Activated CD4-positive, alpha-beta memory T cell treated with anti-CD3 and anti-CD28 coated beads for 36 hours (primary cell): ENCODE measurements at regions of chr10 and their contacts with region 1.

Region 1: GRCh38 chr10:117216611-117217195 is 19.4 kb downstream of the KCNK18 start:
- DNase-seq: peak; percentile 72
- H3K4me3 Mint-ChIP-seq: peak overlapping the region; percentile 63
- H3K27ac Mint-ChIP-seq: no peak overlapping the region
- H3K4me1 Mint-ChIP-seq: peaks cover 9% of the 10 kb centered on the region
- H3K27me3 Mint-ChIP-seq: peaks cover 27% of the 10 kb centered on the region

Region 2: DNA sequence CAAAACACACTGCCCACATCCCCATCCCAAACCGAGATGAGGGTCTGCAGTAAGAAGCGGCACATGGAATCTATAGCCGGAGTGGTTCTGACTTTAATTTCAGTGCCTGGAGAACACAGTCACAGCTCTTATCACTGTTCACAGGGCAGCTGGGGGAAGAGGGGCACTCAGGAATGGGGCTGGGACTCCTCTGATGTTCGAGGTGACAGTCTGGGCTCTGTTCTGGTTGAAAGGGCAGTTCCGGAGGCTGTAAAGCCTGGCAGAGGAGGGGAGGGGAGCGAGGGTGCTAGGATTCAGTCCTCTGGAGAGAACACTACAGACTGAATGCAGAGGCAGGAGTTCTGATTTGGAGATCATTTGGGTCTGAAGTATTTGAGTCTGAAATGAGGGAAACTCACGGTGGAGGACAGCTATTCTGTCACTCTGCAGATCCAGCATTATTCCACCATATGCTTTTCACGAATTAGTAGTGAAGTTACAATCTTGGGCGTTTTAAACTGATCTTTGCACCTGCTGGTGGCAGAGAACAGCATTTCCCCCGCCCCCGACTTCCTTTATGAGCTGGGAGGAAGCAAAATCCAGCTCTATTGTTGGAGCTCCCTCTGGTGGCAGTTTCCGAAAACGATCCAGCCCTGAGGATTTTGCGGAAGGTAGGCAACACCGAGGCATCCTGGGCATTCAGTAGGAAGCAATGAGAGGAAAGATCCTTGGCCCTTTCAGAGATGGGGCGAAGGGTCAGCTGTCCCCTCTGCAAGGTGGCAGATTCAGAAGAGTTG is 42.1 kb before region 1 on chr10:
- CTCF ChIA-PET with region 1: interaction called, 18 read pairs
- POLR2A ChIA-PET with region 1: no interaction called
- intact Hi-C with region 1: no loop called
- DNase-seq: peak; percentile 91
- H3K4me3 Mint-ChIP-seq: peak overlapping the region; percentile 65
- H3K27ac Mint-ChIP-seq: no peak overlapping the region
- H3K4me1 Mint-ChIP-seq: peaks cover 14% of the 10 kb centered on the region
- H3K27me3 Mint-ChIP-seq: peaks cover 34% of the 10 kb centered on the region

Region 3: GRCh38 chr10:117226824-117227451 is 10.2 kb after region 1 on chr10:
- CTCF ChIA-PET with region 1: interaction called, 19 read pairs
- POLR2A ChIA-PET with region 1: no interaction called
- intact Hi-C with region 1: no loop called
- DNase-seq: no peak
- H3K4me3 Mint-ChIP-seq: no peak overlapping the region
- H3K27ac Mint-ChIP-seq: no peak overlapping the region
- H3K4me1 Mint-ChIP-seq: no peaks in the 10 kb centered on the region
- H3K27me3 Mint-ChIP-seq: peaks cover 31% of the 10 kb centered on the region

Region 4: GRCh38 chr10:117249493-117250093 is 32.9 kb after region 1 on chr10:
- CTCF ChIA-PET with region 1: interaction called, 17 read pairs
- POLR2A ChIA-PET with region 1: no interaction called
- intact Hi-C with region 1: no loop called
- DNase-seq: no peak
- H3K4me3 Mint-ChIP-seq: no peak overlapping the region
- H3K27ac Mint-ChIP-seq: no peak overlapping the region
- H3K4me1 Mint-ChIP-seq: peaks cover 2% of the 10 kb centered on the region
- H3K27me3 Mint-ChIP-seq: peaks cover 30% of the 10 kb centered on the region

Region 5: GRCh38 chr10:117320050-117320665 is 103.5 kb after region 1 on chr10:
- CTCF ChIA-PET with region 1: interaction called, 135 read pairs
- POLR2A ChIA-PET with region 1: no interaction called
- intact Hi-C with region 1: loop called (anchors 1 kb)
- DNase-seq: no peak
- H3K4me3 Mint-ChIP-seq: no peak overlapping the region
- H3K27ac Mint-ChIP-seq: no peak overlapping the region
- H3K4me1 Mint-ChIP-seq: no peaks in the 10 kb centered on the region
- H3K27me3 Mint-ChIP-seq: no peaks in the 10 kb centered on the region

Region 6: DNA sequence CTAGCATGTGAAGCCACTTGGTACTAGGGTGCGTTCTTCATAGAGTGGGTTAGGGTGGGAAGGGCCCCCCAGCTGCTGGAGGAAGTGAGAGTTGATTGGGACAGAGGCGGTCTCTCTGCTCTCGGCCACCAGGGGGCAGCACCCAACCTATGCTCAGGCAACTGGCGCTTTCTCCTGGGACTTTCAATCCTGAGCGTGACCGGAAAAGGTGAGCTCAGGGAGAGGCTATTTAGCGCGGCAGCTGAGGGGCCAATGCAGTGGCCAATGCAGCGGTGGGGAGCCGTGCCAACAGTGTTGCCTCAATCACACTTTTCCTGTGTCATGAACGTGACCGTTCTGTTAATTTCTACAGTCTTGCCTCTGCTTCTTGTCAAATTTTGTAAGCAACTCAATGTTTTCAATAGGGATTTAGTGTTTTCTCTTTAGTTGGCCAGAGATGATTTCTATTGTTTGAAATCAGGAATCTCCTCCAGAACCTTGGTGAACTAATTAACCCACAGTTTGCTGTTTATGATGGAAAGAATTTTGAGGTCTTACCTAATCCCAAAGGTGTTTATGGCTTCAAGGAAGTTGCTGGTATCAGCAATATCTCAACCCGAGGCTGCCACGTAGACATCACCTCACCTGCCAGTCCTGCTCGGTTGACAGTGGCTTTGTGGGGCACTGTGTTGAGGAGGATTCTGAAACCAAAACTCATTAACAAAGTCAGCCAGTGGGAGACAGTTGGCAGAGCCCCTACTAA is 226.4 kb after region 1 on chr10:
- CTCF ChIA-PET with region 1: interaction called, 7 read pairs
- POLR2A ChIA-PET with region 1: no interaction called
- intact Hi-C with region 1: loop called (anchors 5 kb)
- DNase-seq: peak; percentile 62
- H3K4me3 Mint-ChIP-seq: no peak overlapping the region
- H3K27ac Mint-ChIP-seq: no peak overlapping the region
- H3K4me1 Mint-ChIP-seq: no peaks in the 10 kb centered on the region
- H3K27me3 Mint-ChIP-seq: peaks cover 23% of the 10 kb centered on the region

Region 7: GRCh38 chr10:118241229-118242137 is 1024.8 kb after region 1 on chr10:
- CTCF ChIA-PET with region 1: interaction called, 14 read pairs
- POLR2A ChIA-PET with region 1: no interaction called
- intact Hi-C with region 1: loop called (anchors 10 kb)
- DNase-seq: peak; percentile 76
- H3K4me3 Mint-ChIP-seq: no peak overlapping the region
- H3K27ac Mint-ChIP-seq: no peak overlapping the region
- H3K4me1 Mint-ChIP-seq: no peaks in the 10 kb centered on the region
- H3K27me3 Mint-ChIP-seq: peaks cover 41% of the 10 kb centered on the region